ENCODE measurements at regions of chr7 and their contacts with region 1.

Region 1: GRCh38 chr7:111735661-111736551 is 173.6 kb upstream of the IMMP2L start:
- DNase-seq: peak in 1 of 2 donors; percentile 70
- ATAC-seq: peak in 6 of 8 donors; percentile 32 to 78 (median 64)
- H3K4me3 ChIP-seq: no peak overlapping the region
- H3K27ac ChIP-seq: no peak overlapping the region
- H3K4me1 ChIP-seq: peaks cover 0 to 16% (median 11%) of the 10 kb centered on the region in 9 donors
- H3K27me3 ChIP-seq: no peaks in the 10 kb centered on the region
- CTCF ChIP-seq: peak; percentile 76 to 91 (median 89)

Region 2: DNA sequence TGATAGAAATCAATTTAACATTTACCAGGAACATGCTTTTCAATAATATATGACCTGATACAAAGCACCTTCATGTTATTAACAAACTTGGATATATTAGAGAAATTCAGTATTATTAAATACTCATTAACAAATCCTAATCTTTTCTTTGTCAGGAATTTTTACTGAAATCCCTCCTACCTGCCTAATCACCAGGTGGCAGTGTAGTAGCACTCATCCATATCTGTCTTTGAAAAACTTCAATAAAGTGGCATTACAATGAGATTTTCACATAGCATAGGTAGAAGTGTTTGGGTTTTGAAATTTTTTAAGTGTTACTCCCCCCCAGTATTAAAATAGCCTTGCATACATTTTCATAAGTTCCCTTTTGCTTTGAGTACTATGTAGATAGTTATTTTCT is 1891.5 kb before region 1 on chr7:
- intact Hi-C with region 1: loop called in 1 of 10 experiments (anchors 10 kb)
- DNase-seq: no peak
- ATAC-seq: no peak
- H3K4me3 ChIP-seq: no peak overlapping the region
- H3K27ac ChIP-seq: no peak overlapping the region
- H3K4me1 ChIP-seq: no peaks in the 10 kb centered on the region
- H3K27me3 ChIP-seq: no peaks in the 10 kb centered on the region
- CTCF ChIP-seq: peak in 6 of 9 donors; percentile 24 to 53 (median 34)

Region 3: GRCh38 chr7:111089822-111090426 is 646.0 kb before region 1 on chr7:
- intact Hi-C with region 1: loop called in 8 of 10 experiments (anchors 5 to 10 kb)
- DNase-seq: no peak
- ATAC-seq: peak in 5 of 8 donors; percentile 64 to 78 (median 66)
- H3K4me3 ChIP-seq: peak overlapping the region in 1 of 10 donors; percentile 59
- H3K27ac ChIP-seq: no peak overlapping the region
- H3K4me1 ChIP-seq: peaks cover 0 to 31% (median 13%) of the 10 kb centered on the region in 9 donors
- H3K27me3 ChIP-seq: no peaks in the 10 kb centered on the region
- CTCF ChIP-seq: peak; percentile 54 to 88 (median 79)

Region 4: GRCh38 chr7:111486472-111487142 is 249.3 kb before region 1 on chr7:
- intact Hi-C with region 1: loop called in 2 of 10 experiments (anchors 10 kb)
- DNase-seq: peak in 1 of 2 donors; percentile 13
- ATAC-seq: peak in 5 of 8 donors; percentile 41 to 69 (median 56)
- H3K4me3 ChIP-seq: no peak overlapping the region
- H3K27ac ChIP-seq: no peak overlapping the region
- H3K4me1 ChIP-seq: peaks cover 0 to 4% (median 0%) of the 10 kb centered on the region in 9 donors
- H3K27me3 ChIP-seq: no peaks in the 10 kb centered on the region
- CTCF ChIP-seq: peak; percentile 23 to 87 (median 76)

Region 5: DNA sequence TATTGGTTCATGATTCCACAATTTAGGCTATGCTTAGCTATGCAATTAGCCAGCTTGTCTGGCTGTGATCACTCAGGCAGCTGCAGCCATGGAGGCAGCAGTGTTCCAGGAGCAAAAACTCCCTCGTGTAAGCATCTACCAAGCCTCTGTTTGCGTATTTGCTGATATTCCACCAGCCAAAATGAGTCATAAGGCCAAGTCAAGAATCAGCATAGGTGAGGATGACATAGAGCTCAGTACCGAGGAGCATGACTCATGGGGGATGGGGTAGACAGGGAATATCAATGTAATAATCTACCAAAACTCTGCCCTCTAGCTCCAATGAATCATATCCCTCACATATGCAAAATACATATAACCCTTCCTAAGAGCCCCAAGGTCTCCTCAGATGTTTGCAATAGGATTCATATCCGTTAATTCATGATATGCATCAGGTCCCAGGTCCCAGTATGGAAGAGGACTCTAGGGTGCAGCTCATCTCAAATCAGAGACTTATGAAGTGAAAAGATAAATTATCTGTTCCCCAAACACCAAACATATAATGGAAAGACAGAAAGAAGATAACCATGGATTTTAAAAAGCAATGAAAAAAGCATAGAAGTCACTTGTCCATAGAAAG is 236.8 kb before region 1 on chr7:
- intact Hi-C with region 1: loop called in 1 of 10 experiments (anchors 10 kb)
- DNase-seq: no peak
- ATAC-seq: no peak
- H3K4me3 ChIP-seq: no peak overlapping the region
- H3K27ac ChIP-seq: no peak overlapping the region
- H3K4me1 ChIP-seq: no peaks in the 10 kb centered on the region
- H3K27me3 ChIP-seq: no peaks in the 10 kb centered on the region
- CTCF ChIP-seq: no peak

Region 6: DNA sequence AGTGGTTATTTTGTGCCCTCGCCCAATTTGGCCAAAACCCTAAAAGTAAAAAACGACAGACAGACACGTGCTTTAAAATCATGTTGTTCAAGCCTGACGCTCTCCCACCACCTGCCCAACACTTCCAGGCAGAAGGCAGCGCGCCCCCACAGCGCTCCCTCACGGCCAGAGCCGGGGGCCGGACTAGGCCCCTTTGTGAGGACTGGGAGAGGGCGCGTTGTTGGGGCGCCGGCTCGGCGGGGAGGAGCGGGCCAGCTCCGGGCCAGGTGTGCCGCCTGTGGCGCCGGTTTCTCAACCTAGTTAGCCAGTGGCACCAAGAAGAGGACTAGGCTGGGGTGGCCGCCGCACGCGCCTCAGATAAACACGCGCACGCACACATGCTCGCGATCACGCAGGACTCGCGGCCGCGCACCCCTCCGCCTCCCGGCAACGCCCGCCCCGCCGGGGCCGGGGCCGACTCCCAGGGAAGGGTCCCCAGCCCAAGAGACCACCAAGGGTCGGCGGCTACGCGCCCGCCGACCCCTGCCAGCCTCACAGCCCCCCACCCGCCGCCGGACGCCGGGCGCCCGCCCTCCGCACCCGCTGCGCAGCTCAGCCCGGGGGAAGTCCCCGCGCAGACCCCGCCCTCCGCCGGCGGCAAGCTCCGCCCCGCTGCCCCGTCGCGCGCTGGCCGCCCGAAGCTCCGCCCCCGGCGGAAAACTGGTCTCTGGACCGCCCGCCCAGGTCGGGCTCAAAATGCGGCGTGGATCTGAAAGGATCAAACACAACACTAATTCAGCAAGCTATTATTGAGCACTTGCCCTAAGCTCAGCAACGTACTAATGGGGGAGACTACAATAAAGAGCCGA is 173.8 kb before region 1 on chr7 and contains the start of gene IMMP2L:
- intact Hi-C with region 1: loop called in 2 of 10 experiments (anchors 5 to 10 kb)
- DNase-seq: peak; percentile 89 to 93
- ATAC-seq: peak; percentile 98 to 100 (median 99)
- H3K4me3 ChIP-seq: peak within 1 kb of the TSS; percentile 73 to 95 (median 83)
- H3K27ac ChIP-seq: peak within 1 kb of the TSS; percentile 66 to 94 (median 90)
- H3K4me1 ChIP-seq: peaks cover 6 to 24% (median 17%) of the 10 kb centered on the region in 9 donors
- H3K27me3 ChIP-seq: peaks cover 0 to under 1% (median 0%) of the 10 kb centered on the region in 7 donors
- CTCF ChIP-seq: peak in 7 of 9 donors; percentile 29 to 64 (median 51)
- total RNA-seq, gene IMMP2L: 12.4 to 20.8 (median 17.5) TPM

Region 7: GRCh38 chr7:111633878-111634277 is 102.0 kb before region 1 on chr7:
- intact Hi-C with region 1: no loop called
- DNase-seq: no peak
- ATAC-seq: no peak
- H3K4me3 ChIP-seq: no peak overlapping the region
- H3K27ac ChIP-seq: no peak overlapping the region
- H3K4me1 ChIP-seq: no peaks in the 10 kb centered on the region
- H3K27me3 ChIP-seq: no peaks in the 10 kb centered on the region
- CTCF ChIP-seq: no peak

Region 8: DNA sequence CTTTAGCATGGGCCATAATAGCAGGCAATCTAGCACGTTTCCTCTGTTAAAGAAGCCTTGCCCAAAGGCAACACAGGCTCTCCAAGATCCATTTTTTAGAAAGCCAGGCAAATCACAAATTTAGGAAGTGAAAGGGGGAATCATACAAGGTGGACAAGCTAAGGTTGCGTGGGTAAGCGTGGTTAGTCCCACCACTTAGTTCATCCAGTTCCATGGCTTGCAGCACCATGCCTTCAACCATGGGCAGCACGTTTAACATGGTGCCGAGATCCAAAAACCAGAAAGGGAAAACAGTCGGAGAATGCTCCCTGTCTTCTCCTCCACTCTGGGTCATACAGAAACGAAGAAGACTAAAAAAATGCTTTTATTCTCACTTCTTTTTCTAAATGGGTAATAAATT is 60.8 kb after region 1 on chr7:
- intact Hi-C with region 1: no loop called
- DNase-seq: no peak
- ATAC-seq: no peak
- H3K4me3 ChIP-seq: no peak overlapping the region
- H3K27ac ChIP-seq: no peak overlapping the region
- H3K4me1 ChIP-seq: no peaks in the 10 kb centered on the region
- H3K27me3 ChIP-seq: no peaks in the 10 kb centered on the region
- CTCF ChIP-seq: no peak

Measured in heart right ventricle (tissue), 16 donors.